Left cardiac atrium (tissue), 4 donors: ENCODE measurements at regions of chr1 and their contacts with region 1.

Region 1: GRCh38 chr1:26874896-26875295 is 11.9 kb downstream of the SFN start:
- DNase-seq: no peak
- ATAC-seq: no peak

Region 2: GRCh38 chr1:26602378-26602959 is 272.4 kb before region 1 on chr1:
- intact Hi-C with region 1: loop called (anchors 5 kb)
- DNase-seq: no peak
- ATAC-seq: peak; percentile 41 to 43

Region 3: DNA sequence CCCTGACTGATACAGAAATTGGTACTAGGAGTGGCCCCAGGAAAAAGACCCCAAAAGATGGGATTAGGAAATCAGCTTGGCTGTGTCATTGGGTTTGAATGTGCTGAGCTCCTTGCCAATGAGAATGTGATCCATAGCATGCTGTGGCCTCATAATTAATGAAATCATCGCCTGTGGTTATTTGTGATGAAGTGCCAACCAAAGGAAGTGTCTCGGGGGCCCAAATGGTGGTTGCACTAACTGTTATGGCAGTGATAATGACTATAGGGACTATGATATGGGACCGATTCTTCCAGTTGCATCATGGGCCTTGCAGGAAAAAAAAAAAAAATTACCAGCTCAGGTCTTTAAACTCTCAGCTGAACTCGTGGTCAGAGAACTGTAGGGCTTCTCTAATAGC is 63.8 kb before region 1 on chr1:
- intact Hi-C with region 1: loop called in 1 of 2 experiments (anchors 5 kb)
- DNase-seq: no peak
- ATAC-seq: no peak

Region 4: GRCh38 chr1:26822737-26823395 is 52.0 kb before region 1 on chr1:
- intact Hi-C with region 1: no loop called
- DNase-seq: no peak
- ATAC-seq: no peak

Region 5: GRCh38 chr1:26853156-26853555 is 21.7 kb before region 1 on chr1:
- intact Hi-C with region 1: loop called in 1 of 2 experiments (anchors 2 kb)
- DNase-seq: peak; percentile 90
- ATAC-seq: peak; percentile 83 to 89

Region 6: DNA sequence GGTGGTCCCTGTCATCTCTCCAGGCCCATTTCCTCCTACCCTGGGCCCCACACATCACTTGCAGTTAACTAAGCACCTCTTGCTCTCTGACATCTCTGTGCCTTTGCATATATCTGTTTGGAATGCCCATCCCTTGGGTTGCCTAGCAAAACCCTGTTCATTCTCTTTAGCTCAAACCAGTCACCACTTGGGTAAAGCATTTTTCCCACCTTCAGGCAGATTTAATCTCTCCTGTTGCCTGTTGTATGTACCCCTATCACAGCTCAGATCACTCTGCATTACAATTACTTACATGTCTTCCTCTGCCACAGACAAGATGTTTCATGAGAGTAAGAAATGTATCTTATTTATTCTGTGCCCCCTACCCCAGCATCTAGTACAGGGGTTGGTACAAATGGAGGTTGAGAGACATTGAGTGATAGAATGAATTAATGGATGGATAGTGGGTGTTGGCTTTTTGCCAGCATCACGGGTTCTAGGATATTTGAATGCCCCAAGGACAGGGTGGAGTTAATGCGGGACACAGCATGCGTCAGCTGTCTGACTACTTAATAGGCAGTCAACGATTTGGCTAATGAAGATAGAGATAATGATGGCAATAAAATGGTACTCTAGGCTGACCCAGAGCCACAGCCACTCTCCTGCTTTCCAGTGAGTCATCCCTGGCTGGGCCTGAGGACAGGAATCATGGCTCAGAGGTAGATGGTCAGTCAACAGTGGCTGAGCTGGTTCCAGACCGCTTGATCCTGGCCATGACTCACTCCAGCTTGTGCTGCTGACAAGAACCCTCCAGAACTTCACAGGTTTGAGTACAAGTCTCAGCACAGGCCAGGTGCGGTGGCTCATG is 32.4 kb after region 1 on chr1:
- intact Hi-C with region 1: no loop called
- DNase-seq: no peak
- ATAC-seq: peak in 1 of 2 donors; percentile 84